Activated naive CD4-positive, alpha-beta T cell treated with anti-CD3 and anti-CD28 coated beads, Interleukin-2, amount 10 ng/mL, durations not matched to agents 7 days and 5 days (primary cell): ENCODE measurements at regions of chr6 and their contacts with region 1.

Region 1: DNA sequence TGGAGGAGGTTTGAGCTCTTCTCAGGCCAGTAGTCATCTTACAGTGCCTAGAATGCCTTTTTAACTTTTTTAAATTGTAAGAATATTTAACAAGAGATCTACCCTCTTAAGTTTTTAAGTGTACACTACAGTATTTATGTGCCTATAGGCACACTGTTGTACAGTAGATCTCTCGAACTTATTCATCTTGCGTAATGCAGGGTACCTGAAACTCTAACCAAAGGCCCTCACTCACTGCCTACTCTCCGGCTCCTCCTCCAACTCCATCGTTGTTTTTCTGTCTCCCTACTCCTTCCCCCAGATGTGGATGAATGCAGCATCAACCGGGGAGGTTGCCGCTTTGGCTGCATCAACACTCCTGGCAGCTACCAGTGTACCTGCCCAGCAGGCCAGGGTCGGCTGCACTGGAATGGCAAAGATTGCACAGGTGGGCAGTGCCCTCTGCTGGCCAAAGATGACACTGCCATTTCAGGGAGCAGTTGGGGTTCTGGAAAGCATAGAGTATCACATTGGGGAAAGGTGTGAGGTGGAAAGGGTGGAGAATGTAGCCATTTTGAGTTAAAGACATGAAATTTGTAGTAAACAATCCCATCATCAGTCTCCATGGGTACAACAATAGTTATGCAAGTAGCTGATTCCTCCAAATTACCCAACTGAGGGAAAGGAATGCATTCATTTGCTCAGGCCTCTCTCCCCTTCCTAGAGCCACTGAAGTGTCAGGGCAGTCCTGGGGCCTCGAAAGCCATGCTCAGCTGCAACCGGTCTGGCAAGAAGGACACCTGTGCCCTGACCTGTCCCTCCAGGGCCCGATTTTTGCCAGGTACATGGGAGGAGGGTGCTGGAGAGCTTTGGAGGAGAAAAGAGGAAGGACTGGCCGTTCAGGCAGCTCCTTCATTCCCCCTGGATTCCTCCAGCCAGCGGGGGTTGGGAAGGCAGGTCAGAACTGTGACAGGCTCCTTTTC is 18.4 kb upstream of the ZNF76 start:
- DNase-seq: peak; percentile 84
- H3K4me3 Mint-ChIP-seq: no peak overlapping the region
- H3K27ac Mint-ChIP-seq: no peak overlapping the region
- H3K4me1 Mint-ChIP-seq: no peaks in the 10 kb centered on the region
- H3K27me3 Mint-ChIP-seq: peaks cover 4% of the 10 kb centered on the region

Region 2: GRCh38 chr6:35139908-35140655 is 101.0 kb before region 1 on chr6:
- CTCF ChIA-PET with region 1: interaction called, 10 read pairs
- DNase-seq: peak; percentile 69
- H3K4me3 Mint-ChIP-seq: no peak overlapping the region
- H3K27ac Mint-ChIP-seq: no peak overlapping the region
- H3K4me1 Mint-ChIP-seq: peaks cover 22% of the 10 kb centered on the region
- H3K27me3 Mint-ChIP-seq: peaks cover 27% of the 10 kb centered on the region

Region 3: GRCh38 chr6:35146453-35146852 is 94.7 kb before region 1 on chr6:
- CTCF ChIA-PET with region 1: interaction called, 47 read pairs
- DNase-seq: peak; percentile 46
- H3K4me3 Mint-ChIP-seq: no peak overlapping the region
- H3K27ac Mint-ChIP-seq: no peak overlapping the region
- H3K4me1 Mint-ChIP-seq: peaks cover 34% of the 10 kb centered on the region
- H3K27me3 Mint-ChIP-seq: peaks cover 23% of the 10 kb centered on the region

Region 4: DNA sequence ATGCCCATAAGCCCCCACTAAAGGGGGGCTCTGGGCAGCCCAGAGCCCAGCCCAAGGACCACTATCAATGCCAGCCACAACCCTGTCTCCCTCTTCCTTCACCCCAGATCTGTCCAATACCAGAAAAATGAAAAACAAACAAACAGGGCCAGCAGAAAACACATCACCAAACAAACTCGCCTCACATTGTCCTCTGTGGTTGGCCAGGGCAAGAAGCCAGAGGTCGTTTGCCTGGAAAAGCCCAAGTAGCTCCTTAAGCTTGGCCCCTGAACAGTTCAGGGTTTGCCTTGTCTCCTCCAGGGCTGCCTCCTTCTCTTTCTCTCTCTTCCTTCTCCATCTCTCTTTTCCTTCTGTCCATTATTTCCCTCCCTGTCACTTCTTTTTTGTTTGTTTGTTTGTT is 37.4 kb before region 1 on chr6:
- CTCF ChIA-PET with region 1: interaction called, 30 read pairs
- DNase-seq: no peak
- H3K4me3 Mint-ChIP-seq: no peak overlapping the region
- H3K27ac Mint-ChIP-seq: no peak overlapping the region
- H3K4me1 Mint-ChIP-seq: no peaks in the 10 kb centered on the region
- H3K27me3 Mint-ChIP-seq: peaks cover 78% of the 10 kb centered on the region

Region 5: GRCh38 chr6:35230950-35231349 is 10.2 kb before region 1 on chr6:
- CTCF ChIA-PET with region 1: interaction called, 28 read pairs
- DNase-seq: no peak
- H3K4me3 Mint-ChIP-seq: no peak overlapping the region
- H3K27ac Mint-ChIP-seq: no peak overlapping the region
- H3K4me1 Mint-ChIP-seq: no peaks in the 10 kb centered on the region
- H3K27me3 Mint-ChIP-seq: peaks cover 8% of the 10 kb centered on the region

Region 6: DNA sequence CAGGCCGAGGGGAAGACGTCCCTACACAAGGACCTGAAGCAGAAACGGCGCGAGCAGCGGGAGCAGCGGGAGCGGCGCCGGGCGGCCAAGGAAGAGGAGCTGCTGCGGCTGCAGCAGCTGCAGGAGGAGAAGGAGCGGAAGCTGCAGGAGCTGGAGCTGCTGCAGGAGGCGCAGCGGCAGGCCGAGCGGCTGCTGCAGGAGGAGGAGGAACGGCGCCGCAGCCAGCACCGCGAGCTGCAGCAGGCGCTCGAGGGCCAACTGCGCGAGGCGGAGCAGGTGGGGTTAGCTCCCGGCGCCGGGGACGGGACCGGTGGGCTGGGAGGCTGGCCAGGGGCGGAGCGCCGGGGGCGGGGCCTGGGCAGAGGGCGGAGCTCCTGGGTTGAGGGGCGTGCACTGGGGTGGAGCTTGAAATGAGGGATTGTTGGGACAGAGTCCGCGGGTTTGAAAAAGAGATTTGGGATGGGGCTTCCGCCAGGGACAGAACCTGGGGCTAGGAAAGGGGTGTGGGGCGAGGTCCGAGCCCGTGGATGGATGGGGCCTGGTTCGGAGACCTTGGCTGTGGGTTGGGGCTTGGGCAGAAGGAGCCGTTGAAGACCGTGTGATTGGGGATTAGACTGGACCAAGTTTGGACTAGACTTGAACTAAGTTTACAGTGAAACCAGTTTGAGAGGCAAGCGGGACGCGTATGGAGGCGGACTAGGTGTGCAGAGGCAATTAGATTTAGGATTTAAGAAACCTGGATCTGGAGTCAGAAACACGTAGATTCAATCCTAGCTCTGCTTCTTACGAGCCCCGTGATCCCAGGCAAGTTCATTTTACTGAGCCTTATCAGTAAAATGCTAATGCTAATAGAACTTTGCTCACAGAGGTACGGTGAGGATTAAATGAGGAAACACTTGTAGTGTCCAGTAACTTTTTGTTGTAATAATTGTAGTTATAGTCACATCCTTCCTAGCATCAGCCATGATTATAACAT is 77.4 kb after region 1 on chr6:
- CTCF ChIA-PET with region 1: no interaction called
- DNase-seq: no peak
- H3K4me3 Mint-ChIP-seq: no peak overlapping the region
- H3K27ac Mint-ChIP-seq: no peak overlapping the region
- H3K4me1 Mint-ChIP-seq: peaks cover 36% of the 10 kb centered on the region
- H3K27me3 Mint-ChIP-seq: no peaks in the 10 kb centered on the region

Region 7: GRCh38 chr6:35377002-35377401 is 135.9 kb after region 1 on chr6:
- CTCF ChIA-PET with region 1: no interaction called
- DNase-seq: no peak
- H3K4me3 Mint-ChIP-seq: no peak overlapping the region
- H3K27ac Mint-ChIP-seq: no peak overlapping the region
- H3K4me1 Mint-ChIP-seq: peaks cover 10% of the 10 kb centered on the region
- H3K27me3 Mint-ChIP-seq: no peaks in the 10 kb centered on the region